ENCODE measurements at regions of chr15 and their contacts with region 1.

Region 1: DNA sequence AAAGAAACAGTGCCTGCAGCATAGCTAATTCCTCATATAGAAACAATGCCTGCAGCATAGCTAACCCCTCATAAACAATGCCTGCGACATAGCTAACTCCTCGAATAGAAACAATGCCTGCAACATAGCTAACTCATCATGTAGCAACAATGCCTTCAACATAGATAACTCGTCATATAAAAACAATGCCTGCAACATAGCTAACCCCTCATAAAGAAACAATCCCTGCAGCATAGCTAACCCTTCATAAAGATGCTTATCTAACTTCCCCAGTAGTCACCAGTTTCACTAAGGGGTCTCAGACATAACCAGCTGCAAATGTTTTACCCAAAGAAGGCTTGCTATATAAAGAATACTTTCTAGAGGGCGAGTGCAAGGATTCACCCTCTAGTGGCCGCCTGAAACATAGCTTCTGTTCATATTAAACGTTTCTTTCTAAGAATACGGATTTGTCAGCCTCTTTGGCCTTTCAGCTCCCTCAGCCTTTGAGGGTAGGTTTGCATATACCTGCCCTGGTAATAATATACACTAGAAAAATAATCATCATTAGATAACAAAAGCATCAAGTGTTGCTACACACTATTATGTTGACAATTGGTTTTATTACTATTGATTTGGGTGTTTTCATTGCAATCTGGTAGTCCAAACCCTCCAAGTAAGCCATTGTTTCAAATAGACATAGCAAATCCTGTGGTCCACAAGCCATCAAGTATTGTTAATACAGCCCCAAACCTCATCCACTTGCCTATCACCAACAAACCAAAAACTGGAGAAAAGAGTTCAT is 44.4 kb upstream of the FAN1 start:
- DNase-seq: peak; percentile 41 to 42
- ATAC-seq: peak; percentile 81 to 86
- H3K4me3 ChIP-seq: no peak overlapping the region
- H3K27ac ChIP-seq: no peak overlapping the region
- H3K4me1 ChIP-seq: no peaks in the 10 kb centered on the region
- CTCF ChIP-seq: peak; percentile 71
- EP300 ChIP-seq: no peak
- POLR2A ChIP-seq: no peak
- RAD21 ChIP-seq: peak; percentile 56 to 57

Region 2: GRCh38 chr15:30872341-30872748 is 13.1 kb after region 1 on chr15:
- CTCF ChIA-PET with region 1: interaction called, 12 read pairs
- POLR2A ChIA-PET with region 1: interaction called, 8 read pairs
- DNase-seq: no peak
- ATAC-seq: no peak
- H3K4me3 ChIP-seq: no peak overlapping the region
- H3K27ac ChIP-seq: no peak overlapping the region
- H3K4me1 ChIP-seq: no peaks in the 10 kb centered on the region
- CTCF ChIP-seq: no peak
- EP300 ChIP-seq: no peak
- POLR2A ChIP-seq: no peak
- RAD21 ChIP-seq: no peak

Region 3: GRCh38 chr15:30896211-30896606 is 36.9 kb after region 1 on chr15:
- CTCF ChIA-PET with region 1: interaction called, 17 read pairs
- POLR2A ChIA-PET with region 1: no interaction called
- DNase-seq: no peak
- ATAC-seq: peak in 1 of 2 experiments; percentile 68; a peak in 3 of 6 replicates
- H3K4me3 ChIP-seq: no peak overlapping the region
- H3K27ac ChIP-seq: no peak overlapping the region
- H3K4me1 ChIP-seq: 0 out of 3 replicates have a peak, but pooled peaks cover 3% of the 10 kb centered on the region
- CTCF ChIP-seq: no peak
- EP300 ChIP-seq: no peak
- POLR2A ChIP-seq: no peak
- RAD21 ChIP-seq: no peak

Measured in A549 (cell line).